Cardiac septum (tissue), 1 donor: ENCODE measurements at regions of chr9 and their contacts with region 1.

Region 1: GRCh38 chr9:35790385-35791296 is 750 bp upstream of the NPR2 start:
- DNase-seq: no peak

Region 2: DNA sequence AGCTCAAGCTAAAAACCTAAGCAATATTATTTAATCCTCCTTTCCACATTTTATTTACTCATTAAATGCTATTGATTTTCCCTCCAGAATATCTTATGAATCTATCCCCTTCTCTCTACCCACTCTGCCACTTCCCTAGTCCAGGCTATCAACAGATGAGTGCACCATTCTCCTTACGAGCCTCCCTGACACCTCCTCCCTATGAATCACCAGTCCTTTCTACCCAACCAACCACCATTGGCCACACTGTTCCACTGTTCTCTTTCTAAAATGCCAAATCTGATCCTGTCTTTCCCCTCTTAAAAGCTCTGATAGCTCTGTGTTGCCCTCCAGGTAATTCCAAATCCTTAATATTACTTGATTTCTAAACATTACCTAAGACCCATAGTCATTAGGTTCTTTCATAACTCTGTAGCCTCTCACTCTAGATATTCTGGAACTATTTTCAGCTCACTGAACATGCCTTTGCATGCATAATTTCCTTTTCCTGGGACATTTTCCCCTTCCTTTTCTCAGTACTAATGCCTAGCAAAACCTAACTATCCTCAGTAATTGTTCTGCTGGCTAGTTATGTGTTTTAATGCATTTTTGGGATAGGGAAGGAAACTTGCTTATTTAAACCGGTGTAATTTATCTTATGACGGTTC is 502.5 kb before region 1 on chr9:
- intact Hi-C with region 1: no loop called
- DNase-seq: no peak

Region 3: DNA sequence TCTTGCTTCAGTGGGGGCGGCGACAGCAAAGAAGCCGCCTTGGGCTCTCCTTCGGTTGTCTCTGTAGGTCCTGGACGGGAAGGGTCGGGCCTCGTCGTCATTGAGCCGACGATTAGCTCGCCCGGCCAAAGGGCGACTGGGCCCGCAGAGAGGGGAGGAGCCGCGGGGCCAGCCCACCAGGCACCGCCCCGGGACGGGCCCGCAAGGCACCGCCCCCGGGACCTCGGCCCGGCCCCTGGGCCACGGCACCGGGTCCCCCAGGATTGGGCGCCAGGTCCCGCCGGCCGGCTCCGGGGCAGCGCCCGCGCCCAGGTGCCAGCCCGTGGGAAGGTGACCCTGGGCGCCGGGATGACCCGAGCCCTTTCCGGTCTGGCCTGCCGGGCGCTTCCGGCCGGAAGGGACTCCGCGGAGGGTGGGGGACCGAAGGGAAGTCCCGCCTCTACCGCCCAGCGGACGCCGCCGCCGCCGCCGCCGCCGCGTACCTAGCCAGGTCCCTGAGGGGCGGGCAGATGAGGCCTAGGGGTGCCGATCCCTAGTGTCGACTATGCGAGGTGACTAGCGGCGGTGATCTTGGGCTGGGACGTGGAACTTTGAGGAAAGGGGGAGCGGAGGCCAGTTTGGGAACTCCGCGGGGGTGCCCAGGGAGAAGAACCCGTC is 41.7 kb before region 1 on chr9 and contains the starts of genes GBA2 and RGP1:
- intact Hi-C with region 1: loop called (anchors 5 kb)
- DNase-seq: peak; percentile 96
- total RNA-seq, gene GBA2: 98.6 TPM
- total RNA-seq, gene RGP1: 40.0 TPM

Region 4: GRCh38 chr9:35814841-35815543 is 24.4 kb after region 1 on chr9 and contains the start of gene HINT2:
- intact Hi-C with region 1: loop called (anchors 2 kb)
- DNase-seq: peak; percentile 96
- total RNA-seq, gene HINT2: 57.6 TPM

Region 5: DNA sequence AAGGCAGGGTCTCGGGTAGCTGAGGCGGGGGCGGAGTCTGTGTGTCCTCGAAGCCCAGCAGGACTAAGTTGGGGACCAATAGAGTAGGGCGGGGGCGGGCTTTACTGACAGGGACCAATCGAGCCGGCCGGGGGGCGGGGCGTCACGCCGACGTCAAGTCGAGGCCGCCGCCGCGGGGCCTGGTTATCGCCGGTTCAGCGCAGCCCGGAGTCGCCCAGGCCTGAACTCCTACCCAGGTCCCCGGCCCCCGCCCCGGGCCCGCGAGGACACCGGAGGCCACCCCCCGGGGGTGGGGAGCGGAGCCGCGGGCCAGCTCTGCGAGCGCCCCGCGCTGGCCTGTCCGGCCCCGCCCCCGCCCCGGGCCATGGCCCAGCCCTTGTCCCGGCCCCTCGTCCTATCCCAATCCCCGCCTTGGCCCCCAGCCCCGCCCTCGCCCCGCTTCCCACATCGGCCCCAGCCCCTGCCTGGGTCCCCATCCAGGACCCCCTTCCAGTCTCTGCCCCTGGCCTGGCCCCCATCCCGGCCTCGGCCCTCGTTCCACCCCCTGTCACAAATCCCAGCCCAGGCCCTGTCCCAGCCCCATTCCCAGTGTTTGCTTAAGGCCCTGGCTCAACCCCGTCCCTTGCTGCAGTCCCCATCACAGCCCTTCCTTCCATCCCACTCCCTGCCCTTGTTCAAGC is 38.6 kb after region 1 on chr9 and contains the start of gene TMEM8B:
- intact Hi-C with region 1: loop called (anchors 2 kb)
- DNase-seq: peak; percentile 98
- total RNA-seq, gene TMEM8B: 22.0 TPM

Region 6: GRCh38 chr9:35882263-35882848 is 91.7 kb after region 1 on chr9:
- intact Hi-C with region 1: loop called (anchors 1 kb)
- DNase-seq: peak; percentile 90